Activated T-helper 1 cell treated with anti-CD3 and anti-CD28 coated beads, Interleukin-12 subunit alpha, Interleukin-12 subunit beta, Interleukin-2, Interleukin-4 antibody, amounts not matched to agents 30 ng/mL and 10 ng/mL and 1 ng/mL, durations not matched to agents 14 hours and 24 hours and 36 hours (primary cell): ENCODE measurements at regions of chr12 and their contacts with region 1.

Region 1: DNA sequence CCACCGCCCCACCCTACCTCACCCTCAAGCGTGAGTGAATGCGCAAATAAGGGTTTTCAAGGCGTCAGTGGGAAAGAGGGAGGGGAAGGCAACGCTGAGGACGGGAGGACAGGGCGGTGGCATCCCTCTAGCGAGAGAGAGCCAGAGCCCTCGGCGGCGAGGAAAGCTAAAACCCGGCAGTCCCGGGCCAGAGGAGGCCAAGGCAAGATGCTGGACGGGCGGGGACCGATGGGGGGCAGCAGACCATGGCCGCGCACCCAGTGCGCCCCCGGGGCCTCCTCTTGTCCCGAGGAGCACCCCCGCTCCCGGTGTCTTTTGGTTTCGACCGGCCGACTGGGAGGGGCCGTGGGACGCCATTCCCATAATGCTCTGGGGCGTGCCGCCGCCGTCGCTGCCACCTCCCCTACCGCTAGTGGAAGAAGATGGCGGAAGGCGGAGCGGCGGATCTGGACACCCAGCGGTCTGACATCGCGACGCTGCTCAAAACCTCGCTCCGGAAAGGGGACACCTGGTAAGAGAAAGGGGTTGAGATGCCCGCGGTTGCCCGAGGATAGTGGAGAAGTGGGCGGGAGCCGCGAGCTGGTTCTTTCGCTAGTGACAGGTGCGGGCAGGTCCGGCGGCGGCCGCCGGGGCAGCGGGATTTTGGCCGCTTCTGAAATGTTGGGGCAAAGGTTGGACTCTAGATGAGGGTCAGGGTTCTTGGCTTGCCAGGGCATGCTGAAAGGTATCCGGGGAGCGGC is at the start of gene USP15:
- DNase-seq: peak; percentile 96
- H3K4me3 Mint-ChIP-seq: peak within 1 kb of the TSS; percentile 97
- H3K27ac Mint-ChIP-seq: peak within 1 kb of the TSS; percentile 99
- H3K4me1 Mint-ChIP-seq: peaks cover 65% of the 10 kb centered on the region
- H3K27me3 Mint-ChIP-seq: no peaks in the 10 kb centered on the region
- total RNA-seq, gene USP15: 100 and 110 TPM in 2 replicates

Region 2: DNA sequence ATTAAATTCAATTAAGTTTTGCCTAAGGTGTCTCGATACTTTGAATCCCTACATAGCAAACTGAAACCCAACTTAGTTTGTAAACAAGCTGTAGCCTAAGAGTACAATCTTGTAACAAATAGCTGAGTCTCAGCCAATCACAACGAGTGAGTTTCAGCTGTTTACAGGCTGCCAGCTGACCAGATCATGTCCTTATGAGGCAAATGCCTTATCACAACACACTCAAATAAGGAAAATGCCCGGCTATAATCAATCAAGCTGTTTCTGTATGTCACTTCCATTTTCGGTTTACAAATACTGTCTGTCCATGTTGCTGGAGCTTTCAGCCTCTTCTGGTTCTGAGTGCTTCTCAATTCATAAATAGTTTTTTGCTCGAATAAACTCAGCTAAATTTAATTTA is 1720.6 kb before region 1 on chr12:
- intact Hi-C with region 1: no loop called
- DNase-seq: no peak
- H3K4me3 Mint-ChIP-seq: no peak overlapping the region
- H3K27ac Mint-ChIP-seq: no peak overlapping the region
- H3K4me1 Mint-ChIP-seq: no peaks in the 10 kb centered on the region
- H3K27me3 Mint-ChIP-seq: no peaks in the 10 kb centered on the region

Region 3: DNA sequence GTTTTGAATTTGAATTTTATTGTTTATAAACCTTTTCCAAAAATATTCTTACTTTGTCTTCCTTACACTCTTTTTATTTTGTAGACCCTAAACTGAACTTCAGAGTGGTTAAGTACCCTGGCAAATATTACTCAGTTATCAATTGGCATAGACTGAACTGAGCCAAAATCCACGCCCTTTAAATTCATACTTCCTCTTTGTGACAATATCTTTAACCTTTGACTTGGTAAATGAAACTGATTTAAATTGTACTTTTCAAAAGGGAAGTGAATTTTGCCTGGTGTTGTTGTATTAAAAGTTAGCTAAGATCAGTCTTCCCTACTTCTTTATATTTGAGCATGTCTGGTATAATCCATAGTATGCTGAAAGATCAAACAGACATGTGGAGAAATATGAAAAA is 184.3 kb before region 1 on chr12:
- intact Hi-C with region 1: no loop called
- DNase-seq: no peak
- H3K4me3 Mint-ChIP-seq: no peak overlapping the region
- H3K27ac Mint-ChIP-seq: no peak overlapping the region
- H3K4me1 Mint-ChIP-seq: no peaks in the 10 kb centered on the region
- H3K27me3 Mint-ChIP-seq: peaks cover 5% of the 10 kb centered on the region

Region 4: GRCh38 chr12:62210422-62210821 is 49.7 kb before region 1 on chr12:
- intact Hi-C with region 1: loop called (anchors 2 kb)
- DNase-seq: peak; percentile 16
- H3K4me3 Mint-ChIP-seq: no peak overlapping the region
- H3K27ac Mint-ChIP-seq: no peak overlapping the region
- H3K4me1 Mint-ChIP-seq: peaks cover 20% of the 10 kb centered on the region
- H3K27me3 Mint-ChIP-seq: peaks cover 21% of the 10 kb centered on the region

Region 5: DNA sequence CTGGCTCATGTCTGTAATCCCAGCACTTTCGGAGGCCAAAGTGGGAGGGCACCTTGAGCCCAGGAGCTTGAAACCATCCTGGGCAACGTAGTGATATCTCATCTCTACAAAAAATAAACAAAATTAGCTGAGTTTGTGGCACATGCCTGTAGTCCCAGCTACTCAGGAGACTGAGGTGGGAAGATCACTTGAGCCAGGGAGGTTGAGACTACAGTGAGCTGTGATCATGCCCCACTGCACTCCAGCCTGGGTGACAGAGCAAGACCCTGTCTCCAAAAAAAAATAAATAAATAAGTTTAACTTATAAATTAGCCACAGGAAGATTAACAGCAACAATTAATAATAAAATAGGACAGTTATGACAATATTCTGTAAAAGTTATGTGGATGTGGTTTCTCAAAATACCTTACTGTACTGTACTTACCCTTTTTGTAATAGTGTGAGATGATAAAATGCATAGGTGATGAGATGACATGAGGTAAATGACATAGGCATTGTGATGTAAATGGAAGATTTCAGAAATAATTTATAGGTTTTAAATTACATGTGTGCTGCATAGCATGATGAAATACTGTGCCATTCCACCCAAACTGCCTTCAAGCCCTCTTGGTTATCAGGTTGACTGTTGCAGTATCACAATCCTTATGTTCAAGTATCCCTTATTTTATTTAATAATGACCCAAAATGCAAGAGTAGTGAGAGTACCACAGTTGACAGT is 22.1 kb after region 1 on chr12:
- intact Hi-C with region 1: loop called (anchors 2 kb)
- DNase-seq: no peak
- H3K4me3 Mint-ChIP-seq: no peak overlapping the region
- H3K27ac Mint-ChIP-seq: no peak overlapping the region
- H3K4me1 Mint-ChIP-seq: peaks cover 72% of the 10 kb centered on the region
- H3K27me3 Mint-ChIP-seq: no peaks in the 10 kb centered on the region

Region 6: DNA sequence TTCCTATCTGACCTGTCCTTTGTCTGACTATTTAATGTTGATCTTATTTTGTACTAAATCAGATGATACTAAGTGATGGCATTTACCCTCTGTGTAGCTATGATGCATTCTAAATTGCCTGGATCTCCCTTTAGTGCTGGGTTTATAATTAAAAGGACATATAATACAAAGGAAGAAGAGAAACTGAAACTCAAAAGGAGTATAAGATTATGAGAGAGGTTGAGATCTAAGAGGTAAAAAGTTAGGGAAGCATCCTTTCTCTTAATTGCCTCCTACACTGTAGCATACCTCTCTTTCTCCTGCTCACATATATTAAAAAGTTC is 119.5 kb after region 1 on chr12:
- intact Hi-C with region 1: loop called (anchors 5 kb)
- DNase-seq: no peak
- H3K4me3 Mint-ChIP-seq: no peak overlapping the region
- H3K27ac Mint-ChIP-seq: peak overlapping the region; percentile 2
- H3K4me1 Mint-ChIP-seq: peaks cover 19% of the 10 kb centered on the region
- H3K27me3 Mint-ChIP-seq: no peaks in the 10 kb centered on the region

Region 7: GRCh38 chr12:62466594-62467491 is 206.7 kb after region 1 on chr12 and contains the start of gene MON2:
- intact Hi-C with region 1: loop called (anchors 1 kb)
- DNase-seq: peak; percentile 86
- H3K4me3 Mint-ChIP-seq: peak within 1 kb of the TSS; percentile 91
- H3K27ac Mint-ChIP-seq: peak within 1 kb of the TSS; percentile 92
- H3K4me1 Mint-ChIP-seq: peaks cover 28% of the 10 kb centered on the region
- H3K27me3 Mint-ChIP-seq: no peaks in the 10 kb centered on the region
- total RNA-seq, gene MON2: 33.1 and 40.8 TPM in 2 replicates

Region 8: GRCh38 chr12:62799126-62799736 is 539.1 kb after region 1 on chr12:
- intact Hi-C with region 1: loop called (anchors 10 kb)
- DNase-seq: peak; percentile 42
- H3K4me3 Mint-ChIP-seq: no peak overlapping the region
- H3K27ac Mint-ChIP-seq: no peak overlapping the region
- H3K4me1 Mint-ChIP-seq: no peaks in the 10 kb centered on the region
- H3K27me3 Mint-ChIP-seq: peaks cover 8% of the 10 kb centered on the region